Activated naive CD4-positive, alpha-beta T cell treated with anti-CD3 and anti-CD28 coated beads for 36 hours (primary cell): ENCODE measurements at regions of chr3 and their contacts with region 1.

Region 1: DNA sequence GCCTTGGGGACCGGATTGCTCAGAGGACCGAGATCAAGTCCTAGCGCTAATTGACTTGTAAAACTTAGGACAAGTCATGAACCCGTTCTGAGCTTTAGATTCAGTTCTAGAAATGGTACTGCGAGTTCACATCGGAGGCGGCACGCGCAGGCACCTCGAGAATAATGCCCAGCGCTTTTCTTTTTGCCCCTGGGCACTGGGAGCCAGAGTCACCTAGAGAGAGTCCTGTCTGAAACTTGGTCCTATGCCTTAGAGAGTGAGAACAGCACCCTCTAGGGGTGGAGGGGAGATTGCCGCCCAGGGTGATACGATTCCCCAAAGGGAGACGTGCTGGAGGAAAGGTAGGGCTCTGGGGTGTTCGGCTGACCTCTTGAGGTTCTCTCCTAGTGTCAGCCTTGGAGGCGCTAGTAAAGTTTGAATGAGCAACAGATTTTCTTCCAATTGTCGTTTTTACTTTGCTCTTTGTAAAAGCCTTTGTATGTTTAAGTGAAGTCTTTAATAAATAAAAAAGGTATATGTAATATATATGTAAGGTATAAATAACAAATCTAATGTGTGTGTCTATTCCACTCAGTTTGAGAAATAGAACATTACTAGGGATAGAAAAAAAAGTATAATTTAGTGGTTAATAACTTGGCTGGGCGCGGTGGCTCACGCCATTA is 826 bp downstream of the EEF1AKMT4 start:
- DNase-seq: peak; percentile 95
- H3K4me3 Mint-ChIP-seq: peak overlapping the region; percentile 91
- H3K27ac Mint-ChIP-seq: peak overlapping the region; percentile 63
- H3K4me1 Mint-ChIP-seq: peaks cover 8% of the 10 kb centered on the region
- H3K27me3 Mint-ChIP-seq: no peaks in the 10 kb centered on the region

Region 2: GRCh38 chr3:183635431-183636220 is 614.7 kb before region 1 on chr3 and contains the start of gene KLHL24:
- CTCF ChIA-PET with region 1: no interaction called
- intact Hi-C with region 1: loop called (anchors 10 kb)
- DNase-seq: peak; percentile 95
- H3K4me3 Mint-ChIP-seq: peak within 1 kb of the TSS; percentile 91
- H3K27ac Mint-ChIP-seq: peak within 1 kb of the TSS; percentile 93
- H3K4me1 Mint-ChIP-seq: peaks cover 40% of the 10 kb centered on the region
- H3K27me3 Mint-ChIP-seq: no peaks in the 10 kb centered on the region
- total RNA-seq, gene KLHL24: 26.2 to 26.9 TPM

Region 3: GRCh38 chr3:183904833-183905780 is 345.2 kb before region 1 on chr3:
- CTCF ChIA-PET with region 1: interaction called, 3 read pairs
- intact Hi-C with region 1: loop called (anchors 2 kb)
- DNase-seq: no peak
- H3K4me3 Mint-ChIP-seq: no peak overlapping the region
- H3K27ac Mint-ChIP-seq: no peak overlapping the region
- H3K4me1 Mint-ChIP-seq: no peaks in the 10 kb centered on the region
- H3K27me3 Mint-ChIP-seq: no peaks in the 10 kb centered on the region

Region 4: GRCh38 chr3:183944775-183945174 is 305.5 kb before region 1 on chr3:
- CTCF ChIA-PET with region 1: no interaction called
- intact Hi-C with region 1: no loop called
- DNase-seq: no peak
- H3K4me3 Mint-ChIP-seq: no peak overlapping the region
- H3K27ac Mint-ChIP-seq: no peak overlapping the region
- H3K4me1 Mint-ChIP-seq: no peaks in the 10 kb centered on the region
- H3K27me3 Mint-ChIP-seq: no peaks in the 10 kb centered on the region

Region 5: GRCh38 chr3:184145111-184145524 is 105.2 kb before region 1 on chr3:
- CTCF ChIA-PET with region 1: interaction called, 7 read pairs
- intact Hi-C with region 1: loop called (anchors 1 kb)
- DNase-seq: peak; percentile 55
- H3K4me3 Mint-ChIP-seq: no peak overlapping the region
- H3K27ac Mint-ChIP-seq: no peak overlapping the region
- H3K4me1 Mint-ChIP-seq: peaks cover 2% of the 10 kb centered on the region
- H3K27me3 Mint-ChIP-seq: no peaks in the 10 kb centered on the region

Region 6: DNA sequence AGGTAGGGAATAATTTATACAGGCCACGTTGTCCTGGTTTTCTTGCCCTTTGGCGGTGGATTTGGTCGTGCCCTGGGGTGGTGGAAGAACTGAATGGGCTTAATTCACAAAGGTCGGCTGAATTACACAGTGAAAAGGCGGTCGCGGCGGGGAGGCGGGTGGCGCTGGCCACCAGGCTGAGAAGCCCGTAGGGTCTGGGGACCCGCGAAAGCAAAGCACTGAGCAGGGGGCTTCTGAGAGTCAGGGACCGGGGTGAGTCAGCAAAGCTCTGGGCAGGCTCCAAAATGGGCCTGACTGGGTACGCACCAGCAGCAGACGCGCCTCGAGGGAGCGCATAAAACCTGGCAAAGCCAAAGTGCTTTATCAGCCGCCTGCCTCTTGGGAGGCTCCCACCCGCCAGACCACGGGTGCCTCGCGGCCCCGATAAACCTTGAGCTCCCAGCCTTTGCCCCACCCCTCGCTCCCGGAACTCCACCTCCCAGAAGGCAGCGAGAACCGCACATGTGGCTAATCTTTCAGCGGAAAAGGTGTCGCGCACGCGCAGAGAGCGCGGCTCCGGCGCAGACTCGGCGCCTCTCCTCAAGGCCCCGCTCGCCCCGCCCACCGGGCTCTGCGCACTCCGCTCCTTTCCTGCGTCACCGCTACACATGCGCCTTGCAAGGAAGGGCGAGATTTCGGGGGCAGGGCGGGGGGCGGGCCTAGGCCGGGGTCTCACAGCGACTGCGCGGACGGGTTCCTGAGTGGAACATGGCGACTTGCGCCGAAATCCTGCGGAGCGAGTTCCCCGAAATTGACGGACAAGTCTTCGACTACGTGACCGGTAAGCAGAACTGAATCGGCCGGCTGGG is 64.6 kb before region 1 on chr3 and contains the start of gene ABCF3:
- CTCF ChIA-PET with region 1: interaction called, 3 read pairs
- intact Hi-C with region 1: loop called (anchors 1 kb)
- DNase-seq: peak; percentile 99
- H3K4me3 Mint-ChIP-seq: peak within 1 kb of the TSS; percentile 94
- H3K27ac Mint-ChIP-seq: peak within 1 kb of the TSS; percentile 92
- H3K4me1 Mint-ChIP-seq: peaks cover 28% of the 10 kb centered on the region
- H3K27me3 Mint-ChIP-seq: no peaks in the 10 kb centered on the region
- total RNA-seq, gene ABCF3: 38.5 to 39.1 TPM

Region 7: GRCh38 chr3:184203526-184203925 is 46.8 kb before region 1 on chr3:
- CTCF ChIA-PET with region 1: no interaction called
- intact Hi-C with region 1: no loop called
- DNase-seq: no peak
- H3K4me3 Mint-ChIP-seq: no peak overlapping the region
- H3K27ac Mint-ChIP-seq: no peak overlapping the region
- H3K4me1 Mint-ChIP-seq: no peaks in the 10 kb centered on the region
- H3K27me3 Mint-ChIP-seq: peaks cover 9% of the 10 kb centered on the region

Region 8: DNA sequence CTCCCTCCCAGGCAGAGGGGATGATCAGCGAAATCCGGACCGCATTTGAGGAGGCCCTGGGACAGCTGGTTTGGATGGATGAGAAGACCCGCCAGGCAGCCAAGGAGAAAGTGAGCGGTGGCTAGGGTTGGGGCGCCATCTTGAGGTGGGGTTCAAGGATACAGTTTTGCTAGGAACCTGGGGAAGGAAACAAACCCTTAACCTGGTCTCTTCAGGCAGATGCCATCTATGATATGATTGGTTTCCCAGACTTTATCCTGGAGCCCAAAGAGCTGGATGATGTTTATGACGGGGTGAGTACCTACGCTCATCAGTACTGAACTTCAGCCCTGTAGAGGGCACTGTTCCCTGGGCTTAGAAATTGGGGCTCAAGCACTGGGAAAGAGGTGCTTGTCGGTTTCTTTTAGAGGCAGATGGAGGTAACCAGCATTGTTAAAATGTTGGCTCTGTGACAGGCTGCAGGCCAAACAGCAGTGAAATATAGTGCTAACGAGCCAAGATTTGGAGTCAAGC is 39.2 kb after region 1 on chr3:
- CTCF ChIA-PET with region 1: interaction called, 4 read pairs
- intact Hi-C with region 1: loop called (anchors 1 kb)
- DNase-seq: peak; percentile 79
- H3K4me3 Mint-ChIP-seq: no peak overlapping the region
- H3K27ac Mint-ChIP-seq: no peak overlapping the region
- H3K4me1 Mint-ChIP-seq: no peaks in the 10 kb centered on the region
- H3K27me3 Mint-ChIP-seq: peaks cover 4% of the 10 kb centered on the region

Region 9: GRCh38 chr3:184362668-184363540 is 112.6 kb after region 1 on chr3:
- CTCF ChIA-PET with region 1: interaction called, 3 read pairs
- intact Hi-C with region 1: loop called (anchors 1 kb)
- DNase-seq: peak; percentile 97
- H3K4me3 Mint-ChIP-seq: peak overlapping the region; percentile 97
- H3K27ac Mint-ChIP-seq: peak overlapping the region; percentile 94
- H3K4me1 Mint-ChIP-seq: peaks cover 30% of the 10 kb centered on the region
- H3K27me3 Mint-ChIP-seq: no peaks in the 10 kb centered on the region

Region 10: GRCh38 chr3:184513276-184514170 is 263.2 kb after region 1 on chr3:
- CTCF ChIA-PET with region 1: no interaction called
- intact Hi-C with region 1: no loop called
- DNase-seq: peak; percentile 89
- H3K4me3 Mint-ChIP-seq: peak overlapping the region; percentile 63
- H3K27ac Mint-ChIP-seq: no peak overlapping the region
- H3K4me1 Mint-ChIP-seq: peaks cover 8% of the 10 kb centered on the region
- H3K27me3 Mint-ChIP-seq: peaks cover 41% of the 10 kb centered on the region